RWPE1 (cell line): ENCODE measurements at regions of chr5 and their contacts with region 1.

Region 1: GRCh38 chr5:73215891-73216610 is 43.1 kb downstream of the TMEM174 start:
- DNase-seq: peak; percentile 93
- H3K27ac ChIP-seq: peak overlapping the region; percentile 63
- CTCF ChIP-seq: peak; percentile 98

Region 2: DNA sequence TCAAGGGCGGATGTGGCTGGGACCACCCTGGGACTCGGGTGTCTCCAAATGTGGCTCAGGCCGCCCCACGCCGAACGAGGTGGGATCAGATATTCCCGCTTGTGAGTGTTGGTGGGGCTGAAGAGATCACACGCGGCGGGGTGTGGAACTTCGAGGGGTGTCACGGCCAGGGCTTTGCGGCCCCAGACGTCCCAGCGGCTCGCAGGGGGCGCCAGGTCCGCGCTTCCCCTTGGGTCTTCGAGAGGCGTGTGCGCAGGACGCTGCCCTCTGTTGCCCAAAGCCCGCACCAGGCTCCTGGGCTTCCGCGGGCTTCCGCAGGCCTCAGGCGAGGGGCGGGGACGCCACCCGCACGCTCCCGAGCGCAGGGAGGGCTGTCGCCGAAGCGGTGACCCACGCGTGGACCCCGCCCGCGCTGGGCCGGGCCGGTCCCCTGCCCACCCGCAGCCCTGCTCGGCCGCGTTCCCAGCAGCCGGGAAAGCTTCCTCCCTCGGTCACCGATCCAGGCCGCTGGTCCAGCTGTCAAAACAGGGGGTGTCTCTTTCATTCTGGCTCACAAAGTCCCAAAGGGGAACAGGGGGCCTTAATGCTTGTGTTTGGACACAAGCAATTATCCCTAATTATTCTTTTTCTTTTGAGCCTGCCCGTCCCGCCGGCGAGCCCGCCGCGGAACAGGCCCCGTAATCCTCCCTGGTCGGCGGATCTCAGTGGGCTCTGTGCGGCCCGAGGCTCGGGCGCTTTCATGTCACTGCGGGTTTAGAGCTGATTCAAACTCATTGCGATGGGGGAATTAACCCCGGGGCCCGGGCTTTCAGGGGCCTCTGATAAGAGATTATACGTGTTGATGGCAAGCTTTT is 17.5 kb after region 1 on chr5:
- CTCF ChIA-PET with region 1: interaction called, 21 read pairs
- POLR2A ChIA-PET with region 1: no interaction called
- DNase-seq: no peak
- H3K27ac ChIP-seq: no peak overlapping the region
- CTCF ChIP-seq: no peak

Region 3: GRCh38 chr5:73298772-73299630 is 83.0 kb after region 1 on chr5:
- CTCF ChIA-PET with region 1: interaction called, 17 read pairs
- POLR2A ChIA-PET with region 1: no interaction called
- DNase-seq: peak; percentile 77
- H3K27ac ChIP-seq: no peak overlapping the region
- CTCF ChIP-seq: peak; percentile 78

Region 4: DNA sequence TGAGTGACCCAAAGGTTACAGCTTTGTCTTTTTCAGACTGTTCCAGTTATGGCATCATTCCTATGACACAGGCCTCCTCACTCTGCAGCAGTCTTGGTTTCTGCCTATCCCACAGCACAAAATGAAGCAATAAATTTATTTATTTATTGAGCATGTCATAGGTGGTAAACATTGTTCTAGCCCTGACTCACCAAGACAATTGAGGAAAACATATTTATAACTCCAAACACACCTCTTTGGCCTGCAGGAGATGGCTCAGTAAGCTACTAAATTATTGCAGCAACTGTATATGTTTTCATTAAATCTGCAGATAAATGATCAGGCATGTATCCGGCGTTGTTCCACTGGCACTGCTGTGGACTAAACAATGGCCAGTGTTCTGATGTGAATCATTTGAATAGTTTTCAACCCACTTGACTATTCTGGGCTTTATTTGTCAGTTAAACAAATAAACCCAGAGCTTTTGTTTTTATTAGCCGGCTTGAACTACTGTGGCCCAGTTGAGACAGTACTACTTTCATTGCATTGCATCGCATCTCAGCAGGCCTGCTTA is 149.3 kb after region 1 on chr5:
- CTCF ChIA-PET with region 1: interaction called, 11 read pairs
- POLR2A ChIA-PET with region 1: no interaction called
- DNase-seq: peak; percentile 52
- H3K27ac ChIP-seq: no peak overlapping the region
- CTCF ChIP-seq: no peak

Region 5: DNA sequence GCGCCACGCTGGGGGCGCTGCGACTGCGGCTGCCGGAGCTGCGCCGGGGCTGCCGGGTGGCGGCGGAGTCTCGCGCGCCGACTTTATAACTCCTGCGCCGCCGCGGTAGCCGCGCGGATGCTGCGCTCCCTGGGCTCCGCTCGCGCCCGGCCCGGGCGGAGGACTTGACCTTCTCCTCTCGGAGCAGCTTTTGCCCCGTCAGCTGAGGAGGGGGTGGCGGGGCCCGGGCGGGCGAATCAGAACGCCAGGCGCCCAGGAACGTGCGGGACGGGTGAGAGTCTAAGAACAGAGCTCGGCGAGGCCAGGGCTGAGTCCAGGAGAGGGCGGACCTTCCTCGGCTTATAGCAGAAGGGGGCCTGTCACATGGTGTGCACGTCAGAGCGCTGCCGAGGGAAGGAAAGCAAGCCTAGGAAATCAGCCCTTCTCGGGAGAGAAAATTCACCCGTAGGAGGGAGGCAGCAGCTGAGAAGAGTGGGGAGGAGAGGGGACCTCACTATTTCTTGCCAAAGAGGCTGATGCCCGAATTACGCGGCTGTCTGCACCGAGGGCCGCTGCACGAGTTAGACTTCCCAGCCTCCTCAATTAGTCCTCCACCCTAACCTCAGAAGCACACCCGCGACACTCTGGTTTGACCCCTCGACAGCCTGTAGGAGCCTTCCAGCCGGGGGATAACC is 232.5 kb after region 1 on chr5 and contains the start of gene FOXD1:
- CTCF ChIA-PET with region 1: interaction called, 113 read pairs
- POLR2A ChIA-PET with region 1: interaction called, 13 read pairs
- DNase-seq: peak; percentile 84
- H3K27ac ChIP-seq: peak within 1 kb of the TSS; percentile 95
- CTCF ChIP-seq: peak; percentile 27; the same call in 1 of the 2 replicates

Region 6: GRCh38 chr5:73498057-73499008 is 282.3 kb after region 1 on chr5 and contains the start of gene BTF3:
- CTCF ChIA-PET with region 1: interaction called, 10 read pairs
- POLR2A ChIA-PET with region 1: no interaction called
- DNase-seq: peak; percentile 97
- H3K27ac ChIP-seq: peak within 1 kb of the TSS; percentile 96
- CTCF ChIP-seq: no peak